Activated naive CD4-positive, alpha-beta T cell treated with anti-CD3 and anti-CD28 coated beads, Interleukin-2, amount 10 ng/mL, durations not matched to agents 7 days and 5 days (primary cell): ENCODE measurements at regions of chr1 and their contacts with region 1.

Region 1: GRCh38 chr1:167533851-167534300 is 15.5 kb upstream of the CD247 start:
- DNase-seq: peak; percentile 73
- H3K4me3 Mint-ChIP-seq: no peak overlapping the region
- H3K27ac Mint-ChIP-seq: no peak overlapping the region
- H3K4me1 Mint-ChIP-seq: peaks cover 6% of the 10 kb centered on the region
- H3K27me3 Mint-ChIP-seq: peaks cover 29% of the 10 kb centered on the region

Region 2: DNA sequence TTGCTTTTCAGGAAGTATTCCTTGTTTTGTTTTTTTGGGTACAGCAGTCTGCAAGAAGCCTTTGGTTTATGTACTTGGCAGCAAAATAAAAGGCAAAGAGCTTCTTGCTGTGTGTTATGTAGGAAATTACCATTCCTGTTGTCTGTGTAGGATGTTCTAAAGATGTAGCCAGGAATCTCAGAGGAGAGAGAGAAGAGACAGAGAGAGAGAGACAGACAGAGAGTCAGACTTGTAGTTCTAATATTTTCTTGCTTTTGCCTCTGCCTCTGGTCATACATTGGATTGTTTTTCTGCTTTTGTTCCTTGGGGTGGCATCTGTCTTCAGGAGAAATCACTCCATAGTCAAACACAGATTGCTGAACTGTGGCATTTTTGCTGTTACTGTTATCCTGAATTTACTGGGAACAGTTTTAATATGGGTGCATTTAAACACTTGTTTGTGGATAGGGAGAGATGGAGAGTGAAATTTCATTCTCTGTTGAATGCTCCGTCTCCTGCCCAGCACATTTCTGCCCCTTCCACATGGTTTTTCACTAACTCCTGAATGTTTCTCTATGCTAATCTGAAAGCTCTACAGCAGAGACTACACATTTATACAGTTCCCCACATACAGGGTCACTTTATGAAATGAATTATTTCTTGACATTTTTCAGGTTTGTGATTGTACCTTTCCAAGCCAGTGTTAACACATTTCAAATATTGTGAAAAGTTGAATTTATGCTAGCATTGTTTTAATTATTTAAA is 263.4 kb before region 1 on chr1:
- CTCF ChIA-PET with region 1: interaction called, 57 read pairs
- DNase-seq: no peak
- H3K4me3 Mint-ChIP-seq: no peak overlapping the region
- H3K27ac Mint-ChIP-seq: no peak overlapping the region
- H3K4me1 Mint-ChIP-seq: peaks cover 14% of the 10 kb centered on the region
- H3K27me3 Mint-ChIP-seq: no peaks in the 10 kb centered on the region

Region 3: GRCh38 chr1:167442124-167442848 is 91.6 kb before region 1 on chr1:
- CTCF ChIA-PET with region 1: interaction called, 53 read pairs
- DNase-seq: peak; percentile 92
- H3K4me3 Mint-ChIP-seq: no peak overlapping the region
- H3K27ac Mint-ChIP-seq: peak overlapping the region; percentile 80
- H3K4me1 Mint-ChIP-seq: peaks cover 95% of the 10 kb centered on the region
- H3K27me3 Mint-ChIP-seq: no peaks in the 10 kb centered on the region

Region 4: DNA sequence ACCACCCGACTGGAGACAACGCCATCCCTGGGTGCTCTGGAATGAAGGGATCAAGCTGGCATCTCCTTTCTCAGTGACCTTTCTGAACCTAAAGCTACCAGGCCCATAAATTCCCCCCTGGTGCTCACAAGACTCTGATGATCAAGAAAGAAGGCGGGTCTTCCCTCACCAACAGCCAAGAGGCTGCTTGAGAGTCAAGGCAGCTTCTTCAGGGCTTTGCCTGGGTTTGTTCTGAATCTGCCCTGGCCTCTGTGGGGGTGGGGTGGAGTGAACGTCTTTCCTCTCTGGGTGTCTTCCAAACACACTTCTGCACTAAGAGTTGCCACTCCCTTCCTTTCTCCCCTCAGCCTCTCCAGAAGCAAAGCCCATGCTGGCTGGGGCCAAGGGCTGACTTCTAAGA is 51.7 kb before region 1 on chr1:
- CTCF ChIA-PET with region 1: interaction called, 11 read pairs
- DNase-seq: peak; percentile 77
- H3K4me3 Mint-ChIP-seq: peak overlapping the region; percentile 63
- H3K27ac Mint-ChIP-seq: peak overlapping the region; percentile 93
- H3K4me1 Mint-ChIP-seq: peaks cover 97% of the 10 kb centered on the region
- H3K27me3 Mint-ChIP-seq: no peaks in the 10 kb centered on the region

Region 5: DNA sequence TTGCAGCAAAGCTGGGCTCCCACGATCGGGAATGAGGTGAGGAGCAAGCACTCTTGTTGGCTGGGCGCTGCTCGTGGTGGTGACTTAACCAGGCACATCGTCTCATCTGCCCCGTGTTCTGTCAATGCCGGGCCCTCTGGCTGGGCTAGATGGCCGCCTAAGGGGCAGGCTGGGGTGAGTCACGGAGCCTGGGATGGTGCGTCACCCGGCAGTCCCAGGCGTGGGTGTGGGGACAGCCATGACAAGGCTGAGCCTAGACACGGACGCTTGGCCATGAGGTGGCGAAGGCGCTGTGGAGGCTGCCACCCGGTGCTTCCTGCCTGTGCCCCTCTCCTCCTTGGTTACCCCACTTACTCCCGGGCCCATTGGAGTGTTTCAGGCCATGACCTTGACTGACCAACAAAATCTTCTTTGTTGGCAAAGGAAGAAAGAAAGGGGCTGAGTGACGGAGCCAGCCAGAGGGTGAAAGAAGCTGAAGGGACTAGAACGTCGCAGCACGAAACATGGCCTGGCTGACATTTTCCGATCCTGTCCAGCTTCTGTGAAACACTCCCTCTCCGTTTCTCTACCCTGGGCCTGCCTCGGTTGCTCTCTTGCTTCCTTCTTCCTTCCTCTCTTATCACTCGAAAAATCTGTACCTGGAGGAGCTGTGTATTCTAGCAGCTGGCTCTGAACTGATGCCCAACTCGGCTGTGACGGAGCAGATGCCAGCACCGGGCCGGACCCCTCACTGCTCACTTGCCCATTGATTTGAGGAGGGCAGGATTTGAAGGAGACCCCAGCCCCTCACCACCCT is 16.1 kb before region 1 on chr1:
- CTCF ChIA-PET with region 1: interaction called, 55 read pairs
- DNase-seq: peak; percentile 87
- H3K4me3 Mint-ChIP-seq: peak overlapping the region; percentile 99
- H3K27ac Mint-ChIP-seq: peak overlapping the region; percentile 100
- H3K4me1 Mint-ChIP-seq: peaks cover 45% of the 10 kb centered on the region
- H3K27me3 Mint-ChIP-seq: no peaks in the 10 kb centered on the region

Region 6: DNA sequence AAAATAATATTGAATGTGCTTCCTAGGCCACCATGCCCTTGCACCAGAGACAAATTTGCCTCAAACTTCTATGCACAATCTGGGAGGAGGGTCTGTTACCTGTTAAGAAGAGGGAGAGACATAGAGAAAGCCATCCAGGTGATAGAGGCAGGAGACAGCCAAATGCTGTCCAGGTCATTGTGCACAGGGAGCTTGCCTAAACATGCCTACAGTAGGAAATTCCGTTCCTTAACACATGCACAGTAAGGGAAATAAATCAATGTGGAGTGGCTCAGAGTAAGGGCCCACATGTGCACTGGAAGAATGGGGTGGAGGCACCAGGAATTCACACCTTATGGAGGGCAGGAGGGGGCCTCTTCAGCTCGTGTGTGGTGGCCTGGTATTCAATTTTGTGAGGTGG is 39.1 kb after region 1 on chr1:
- CTCF ChIA-PET with region 1: no interaction called
- DNase-seq: no peak
- H3K4me3 Mint-ChIP-seq: no peak overlapping the region
- H3K27ac Mint-ChIP-seq: no peak overlapping the region
- H3K4me1 Mint-ChIP-seq: no peaks in the 10 kb centered on the region
- H3K27me3 Mint-ChIP-seq: peaks cover 32% of the 10 kb centered on the region